ENCODE measurements at regions of chr5 and their contacts with region 1.

Region 1: DNA sequence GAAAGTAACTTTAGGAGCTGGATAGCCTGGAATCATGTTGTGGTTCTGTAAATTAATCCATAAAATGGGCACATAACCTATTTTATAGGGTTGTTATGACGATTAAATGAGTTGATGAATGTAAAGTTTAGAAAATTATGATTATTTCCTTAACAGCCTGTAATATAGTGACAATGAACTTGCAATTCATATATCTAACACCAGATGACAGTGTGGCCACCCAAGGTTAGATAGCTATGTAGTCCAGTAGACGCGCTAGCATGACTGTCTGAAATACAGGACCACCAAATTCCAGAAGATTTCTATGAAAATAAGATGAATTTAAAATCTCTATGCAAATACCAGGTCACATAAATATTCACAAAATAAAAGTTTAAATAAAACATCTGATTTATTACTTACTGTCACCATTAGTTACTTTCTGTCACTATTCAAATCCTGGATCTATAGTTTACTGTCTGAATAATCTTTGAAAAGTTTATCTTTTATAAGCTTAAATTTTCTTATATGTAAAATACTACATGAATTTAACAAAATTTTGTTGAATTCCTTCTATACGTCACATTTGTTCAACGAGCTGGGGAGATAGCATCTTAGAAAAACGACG is 26.1 kb upstream of the MACIR start:
- DNase-seq: no peak
- ATAC-seq: peak; percentile 50 to 77

Region 2: GRCh38 chr5:103475629-103476240 is 243.2 kb after region 1 on chr5:
- intact Hi-C with region 1: loop called (anchors 1 to 5 kb)
- DNase-seq: no peak
- ATAC-seq: peak in 1 of 2 donors; percentile 39